ENCODE measurements at regions of chr10 and their contacts with region 1.

Region 1: GRCh38 chr10:133335246-133336117 is 1.2 kb downstream of the CALY start:
- DNase-seq: peak; percentile 56 to 95 (median 81)
- ATAC-seq: peak; percentile 53
- H3K4me3 ChIP-seq: peak overlapping the region; percentile 65
- H3K4me3 Mint-ChIP-seq: peak overlapping the region in 9 of 10 donors; percentile 48 to 81 (median 68)
- H3K27ac ChIP-seq: peak overlapping the region; percentile 78
- H3K27ac Mint-ChIP-seq: peak overlapping the region in 8 of 9 donors; percentile 50 to 93 (median 78)
- H3K4me1 ChIP-seq: peaks cover 10 to 20% of the 10 kb centered on the region in 2 donors
- H3K4me1 Mint-ChIP-seq: peaks cover 0 to 5% (median 0%) of the 10 kb centered on the region in 7 donors
- H3K27me3 ChIP-seq: no peaks in the 10 kb centered on the region
- H3K27me3 Mint-ChIP-seq: peaks cover 0 to 41% (median 0%) of the 10 kb centered on the region in 5 donors

Region 2: GRCh38 chr10:132257271-132257670 is 1078.2 kb before region 1 on chr10:
- CTCF ChIA-PET with region 1: no interaction called
- POLR2A ChIA-PET with region 1: no interaction called
- intact Hi-C with region 1: no loop called
- DNase-seq: no peak
- ATAC-seq: peak; percentile 65
- H3K4me3 ChIP-seq: no peak overlapping the region
- H3K4me3 Mint-ChIP-seq: no peak overlapping the region
- H3K27ac ChIP-seq: no peak overlapping the region
- H3K27ac Mint-ChIP-seq: no peak overlapping the region
- H3K4me1 ChIP-seq: no peaks in the 10 kb centered on the region
- H3K4me1 Mint-ChIP-seq: peaks cover 0 to 22% (median 0%) of the 10 kb centered on the region in 7 donors
- H3K27me3 ChIP-seq: no peaks in the 10 kb centered on the region
- H3K27me3 Mint-ChIP-seq: no peaks in the 10 kb centered on the region

Region 3: GRCh38 chr10:133357285-133358151 is 22.0 kb after region 1 on chr10 and contains the start of gene FUOM:
- CTCF ChIA-PET with region 1: interaction called, 3 read pairs
- POLR2A ChIA-PET with region 1: interaction called, 16 read pairs
- intact Hi-C with region 1: loop called in 1 of 2 experiments (anchors 1 kb)
- DNase-seq: peak; percentile 60 to 88 (median 74)
- ATAC-seq: peak; percentile 95
- H3K4me3 ChIP-seq: peak within 1 kb of the TSS; percentile 61
- H3K4me3 Mint-ChIP-seq: peak within 1 kb of the TSS; percentile 62 to 85 (median 79)
- H3K27ac ChIP-seq: peak within 1 kb of the TSS; percentile 76
- H3K27ac Mint-ChIP-seq: peak within 1 kb of the TSS in 7 of 9 donors; percentile 23 to 72 (median 59)
- H3K4me1 ChIP-seq: no peaks in the 10 kb centered on the region
- H3K4me1 Mint-ChIP-seq: peaks cover 0 to 6% (median 4%) of the 10 kb centered on the region in 7 donors
- H3K27me3 ChIP-seq: no peaks in the 10 kb centered on the region
- H3K27me3 Mint-ChIP-seq: no peaks in the 10 kb centered on the region
- total RNA-seq, gene FUOM: 11.2 to 24.6 (median 16.9) TPM

Region 4: GRCh38 chr10:133373104-133373624 is 37.7 kb after region 1 on chr10 and contains the start of gene ECHS1:
- CTCF ChIA-PET with region 1: interaction called, 4 read pairs
- POLR2A ChIA-PET with region 1: interaction called, 3 read pairs
- intact Hi-C with region 1: loop called in 1 of 2 experiments (anchors 1 kb)
- DNase-seq: peak; percentile 81 to 99 (median 90)
- ATAC-seq: peak; percentile 99
- H3K4me3 ChIP-seq: peak within 1 kb of the TSS; percentile 68
- H3K4me3 Mint-ChIP-seq: peak within 1 kb of the TSS; percentile 57 to 92 (median 81)
- H3K27ac ChIP-seq: peak within 1 kb of the TSS; percentile 82
- H3K27ac Mint-ChIP-seq: peak within 1 kb of the TSS; percentile 14 to 83 (median 67)
- H3K4me1 ChIP-seq: peaks cover 0 to 3% of the 10 kb centered on the region in 2 donors
- H3K4me1 Mint-ChIP-seq: peaks cover 0 to 21% (median 12%) of the 10 kb centered on the region in 7 donors
- H3K27me3 ChIP-seq: no peaks in the 10 kb centered on the region
- H3K27me3 Mint-ChIP-seq: peaks cover 0 to 14% (median 0%) of the 10 kb centered on the region in 5 donors
- total RNA-seq, gene ECHS1: 17.5 to 39.8 (median 28.9) TPM

Region 5: DNA sequence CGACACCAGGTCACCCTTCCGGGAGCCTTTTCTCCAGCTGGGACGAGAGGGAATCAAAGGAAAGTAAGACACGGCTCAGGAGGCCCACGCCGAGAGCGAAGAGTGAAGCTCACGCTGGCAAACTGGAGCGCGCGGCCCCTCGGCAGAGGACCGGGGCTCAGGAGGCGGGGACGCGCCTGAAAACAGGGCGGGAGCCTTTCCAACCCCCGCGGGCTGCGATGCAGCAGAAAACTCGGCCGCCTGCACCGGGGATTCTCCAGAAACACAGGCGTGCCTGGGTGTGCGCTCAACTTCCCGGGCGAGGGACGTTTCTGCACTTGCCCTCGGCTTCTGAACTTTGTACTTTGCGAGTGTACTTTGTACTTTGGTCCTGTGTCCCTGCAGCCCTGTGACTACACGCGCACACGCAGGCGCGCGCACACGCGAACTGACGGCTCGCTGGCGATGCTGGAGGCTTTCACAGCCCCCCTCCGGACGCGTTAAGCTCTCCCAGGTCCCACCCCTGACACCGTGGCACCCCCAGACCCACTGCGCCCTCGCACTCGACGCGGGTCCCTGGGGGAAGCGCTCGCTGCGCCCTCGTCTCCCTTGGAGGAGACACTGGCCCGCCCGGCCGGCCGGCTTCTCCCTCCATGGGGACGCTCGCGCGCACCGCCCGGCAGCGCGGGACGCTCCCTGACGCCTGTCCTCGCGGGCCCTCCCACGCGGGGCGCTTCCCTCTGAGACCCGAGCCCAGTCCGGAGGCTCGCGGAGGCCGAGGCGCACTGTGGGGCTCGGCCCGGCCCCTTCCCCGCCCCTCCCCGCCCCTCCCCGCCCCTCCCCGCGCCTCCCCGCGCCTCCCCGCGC is 43.0 kb after region 1 on chr10:
- CTCF ChIA-PET with region 1: interaction called, 4 read pairs
- POLR2A ChIA-PET with region 1: interaction called, 3 read pairs
- intact Hi-C with region 1: loop called in 1 of 2 experiments (anchors 1 kb)
- DNase-seq: peak in 8 of 9 donors; percentile 51 to 78 (median 59)
- ATAC-seq: peak; percentile 73
- H3K4me3 ChIP-seq: peak overlapping the region; percentile 92
- H3K4me3 Mint-ChIP-seq: peak overlapping the region; percentile 82 to 90 (median 86)
- H3K27ac ChIP-seq: peak overlapping the region; percentile 69
- H3K27ac Mint-ChIP-seq: peak overlapping the region in 5 of 9 donors; percentile 33 to 84 (median 75)
- H3K4me1 ChIP-seq: peaks cover 0 to 3% of the 10 kb centered on the region in 2 donors
- H3K4me1 Mint-ChIP-seq: peaks cover 0 to 18% (median 10%) of the 10 kb centered on the region in 7 donors
- H3K27me3 ChIP-seq: no peaks in the 10 kb centered on the region
- H3K27me3 Mint-ChIP-seq: peaks cover 0 to 14% (median 0%) of the 10 kb centered on the region in 5 donors

Region 6: DNA sequence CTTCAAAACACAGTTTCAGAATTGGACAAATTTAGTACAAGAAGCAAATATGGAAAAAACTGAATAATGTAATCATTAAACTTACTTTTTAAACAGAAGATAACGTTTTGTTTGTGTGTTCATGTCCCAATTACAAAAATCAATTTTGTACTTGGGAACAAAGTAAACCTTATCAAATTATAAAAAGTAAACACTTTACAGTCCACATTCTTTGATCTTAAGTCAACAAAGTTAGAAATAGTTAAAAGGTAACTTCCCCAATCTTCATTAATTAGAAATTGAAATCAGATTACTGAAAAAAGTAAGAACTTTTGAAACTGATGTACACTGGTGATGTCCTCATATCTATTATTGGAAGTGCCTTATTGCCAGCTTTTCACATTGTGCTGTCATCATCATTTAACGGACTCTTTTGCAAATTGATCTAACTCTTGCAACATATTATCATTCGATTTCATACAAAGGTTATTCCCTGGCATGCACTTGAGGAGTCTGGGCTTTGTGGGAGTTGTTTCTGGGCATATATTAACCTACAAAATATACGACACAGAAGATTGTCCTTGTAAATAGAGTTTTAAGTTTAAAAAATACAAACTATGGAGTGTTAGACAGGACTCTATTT is 176.5 kb after region 1 on chr10:
- CTCF ChIA-PET with region 1: no interaction called
- POLR2A ChIA-PET with region 1: no interaction called
- intact Hi-C with region 1: no loop called
- DNase-seq: no peak
- ATAC-seq: no peak
- H3K4me3 ChIP-seq: no peak overlapping the region
- H3K4me3 Mint-ChIP-seq: no peak overlapping the region
- H3K27ac ChIP-seq: no peak overlapping the region
- H3K27ac Mint-ChIP-seq: no peak overlapping the region
- H3K4me1 ChIP-seq: no peaks in the 10 kb centered on the region
- H3K4me1 Mint-ChIP-seq: no peaks in the 10 kb centered on the region
- H3K27me3 ChIP-seq: no peaks in the 10 kb centered on the region
- H3K27me3 Mint-ChIP-seq: peaks cover 10 to 43% (median 26%) of the 10 kb centered on the region in 5 donors